Psoas muscle (tissue), 8 donors: ENCODE measurements at regions of chr1 and their contacts with region 1.

Region 1: GRCh38 chr1:113759333-113760101 is at the start of gene PHTF1:
- DNase-seq: peak; percentile 82 to 85
- ATAC-seq: peak; percentile 88 to 91 (median 90)
- H3K4me3 ChIP-seq: peak within 1 kb of the TSS; percentile 84
- H3K27ac ChIP-seq: peak within 1 kb of the TSS; percentile 86
- H3K4me1 ChIP-seq: peaks cover 8% of the 10 kb centered on the region
- H3K27me3 ChIP-seq: no peaks in the 10 kb centered on the region
- CTCF ChIP-seq: no peak
- total RNA-seq, gene PHTF1: 6.0 to 12.6 (median 9.2) TPM

Region 2: GRCh38 chr1:113438505-113439276 is 320.8 kb before region 1 on chr1:
- intact Hi-C with region 1: no loop called
- DNase-seq: no peak
- ATAC-seq: no peak
- H3K4me3 ChIP-seq: no peak overlapping the region
- H3K27ac ChIP-seq: no peak overlapping the region
- H3K4me1 ChIP-seq: no peaks in the 10 kb centered on the region
- H3K27me3 ChIP-seq: no peaks in the 10 kb centered on the region
- CTCF ChIP-seq: no peak

Region 3: DNA sequence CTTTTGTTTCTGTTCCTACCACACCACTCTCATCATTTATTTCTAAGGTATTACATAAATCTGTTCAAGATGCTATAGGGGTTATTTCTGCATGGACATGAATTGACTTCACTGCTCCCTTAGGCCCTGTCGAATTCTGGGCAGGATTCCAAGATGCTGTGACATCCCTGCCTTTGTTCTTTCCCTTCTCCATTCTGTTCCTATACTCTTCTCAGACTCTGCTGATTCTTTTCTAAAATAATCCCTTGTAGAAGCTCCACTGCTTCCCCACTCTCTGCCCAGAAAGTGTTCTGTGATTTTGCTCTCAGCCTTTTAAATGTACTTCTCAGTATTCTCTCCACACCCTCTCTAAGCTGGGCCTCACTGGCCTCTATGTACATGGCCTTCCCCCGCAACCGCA is 99.4 kb before region 1 on chr1:
- intact Hi-C with region 1: no loop called
- DNase-seq: no peak
- ATAC-seq: no peak
- H3K4me3 ChIP-seq: no peak overlapping the region
- H3K27ac ChIP-seq: no peak overlapping the region
- H3K4me1 ChIP-seq: peaks cover 15% of the 10 kb centered on the region
- H3K27me3 ChIP-seq: no peaks in the 10 kb centered on the region
- CTCF ChIP-seq: no peak

Region 4: GRCh38 chr1:113782406-113782805 is 22.9 kb after region 1 on chr1:
- intact Hi-C with region 1: loop called in 1 of 2 experiments (anchors 1 kb)
- DNase-seq: no peak
- ATAC-seq: peak in 1 of 4 donors; percentile 22
- H3K4me3 ChIP-seq: peak overlapping the region; percentile 37
- H3K27ac ChIP-seq: peak overlapping the region; percentile 83
- H3K4me1 ChIP-seq: peaks cover 81% of the 10 kb centered on the region
- H3K27me3 ChIP-seq: no peaks in the 10 kb centered on the region
- CTCF ChIP-seq: no peak

Region 5: GRCh38 chr1:113811888-113812660 is 52.6 kb after region 1 on chr1 and contains the start of gene RSBN1:
- intact Hi-C with region 1: loop called (anchors 5 kb)
- DNase-seq: peak; percentile 99
- ATAC-seq: peak; percentile 94 to 98 (median 96)
- H3K4me3 ChIP-seq: peak within 1 kb of the TSS; percentile 82
- H3K27ac ChIP-seq: peak within 1 kb of the TSS; percentile 96
- H3K4me1 ChIP-seq: peaks cover 26% of the 10 kb centered on the region
- H3K27me3 ChIP-seq: no peaks in the 10 kb centered on the region
- CTCF ChIP-seq: no peak
- total RNA-seq, gene RSBN1: 11.0 to 20.8 (median 12.7) TPM

Region 6: DNA sequence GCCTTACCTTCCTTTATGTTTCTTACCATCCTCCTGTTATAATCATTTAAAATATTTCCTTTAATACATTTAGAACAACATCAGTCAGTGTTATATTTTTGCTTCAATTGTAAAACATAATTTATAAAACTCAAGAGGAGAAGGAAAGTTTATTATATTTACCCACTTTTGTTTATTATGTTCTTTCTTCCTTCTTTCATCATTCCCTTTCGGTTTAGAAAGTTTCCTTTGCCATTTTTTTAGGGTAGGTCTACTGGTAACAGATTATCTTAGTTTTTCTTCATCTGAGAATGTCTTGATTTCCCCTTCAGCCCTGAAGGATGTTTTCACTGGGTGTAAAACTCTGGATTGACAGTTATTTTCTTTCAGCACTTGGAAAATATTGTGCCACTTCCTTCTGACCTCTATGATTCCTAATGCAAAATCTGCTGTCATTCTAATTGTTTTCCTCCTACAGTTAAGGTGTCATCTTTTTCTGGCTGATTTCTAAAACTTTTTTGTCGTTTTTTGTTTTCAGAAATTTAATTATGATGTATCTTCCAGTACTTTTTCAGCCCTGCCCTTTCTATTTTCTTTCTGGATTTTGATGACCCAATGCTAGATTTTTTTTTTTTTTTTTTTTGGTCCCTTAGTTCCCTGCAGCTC is 87.0 kb after region 1 on chr1:
- intact Hi-C with region 1: no loop called
- DNase-seq: no peak
- ATAC-seq: no peak
- H3K4me3 ChIP-seq: no peak overlapping the region
- H3K27ac ChIP-seq: no peak overlapping the region
- H3K4me1 ChIP-seq: no peaks in the 10 kb centered on the region
- H3K27me3 ChIP-seq: no peaks in the 10 kb centered on the region
- CTCF ChIP-seq: no peak

Region 7: GRCh38 chr1:113904674-113905434 is 145.3 kb after region 1 on chr1 and contains the starts of genes AP4B1 and DCLRE1B:
- intact Hi-C with region 1: loop called (anchors 5 to 10 kb)
- DNase-seq: peak; percentile 99 to 100
- ATAC-seq: peak; percentile 95 to 97 (median 96)
- H3K4me3 ChIP-seq: peak within 1 kb of the TSS; percentile 91
- H3K27ac ChIP-seq: peak within 1 kb of the TSS; percentile 89
- H3K4me1 ChIP-seq: peaks cover 9% of the 10 kb centered on the region
- H3K27me3 ChIP-seq: no peaks in the 10 kb centered on the region
- CTCF ChIP-seq: peak; percentile 70
- total RNA-seq, gene AP4B1: 6.8 to 12.0 (median 9.3) TPM
- total RNA-seq, gene DCLRE1B: 1.8 to 2.3 (median 2.1) TPM